IMR-90 (cell line): ENCODE measurements at regions of chr1 and their contacts with region 1.

Region 1: DNA sequence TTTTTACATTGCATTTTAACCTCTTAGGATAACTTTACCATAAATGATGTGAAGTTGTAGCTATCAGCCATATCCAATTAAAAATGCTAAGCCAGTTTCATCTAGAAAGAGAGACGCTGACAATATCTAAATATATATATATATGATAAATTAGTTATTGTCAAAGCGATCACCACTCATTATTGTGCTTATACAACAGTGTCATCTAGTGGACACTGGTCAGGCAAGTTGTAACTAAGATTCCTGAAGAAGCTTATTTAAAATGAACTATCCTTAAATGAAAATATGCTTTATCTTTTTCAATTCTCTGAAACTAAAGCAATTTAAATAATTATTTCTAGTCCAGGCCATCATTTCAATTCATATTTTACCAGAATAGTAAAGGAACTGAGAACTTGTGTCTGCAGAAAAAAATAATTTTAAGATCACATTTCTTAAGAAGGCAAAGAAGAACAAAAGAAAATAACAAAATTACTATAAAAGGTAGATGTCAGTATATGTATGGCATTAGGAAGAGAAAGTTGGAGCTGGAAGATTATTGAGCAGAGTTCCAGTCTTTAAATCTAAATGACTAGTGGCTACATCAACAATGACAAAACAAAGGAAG is 193.3 kb upstream of the SNX7 start:
- DNase-seq: peak; percentile 81
- ATAC-seq: peak; percentile 65; the same call in 1 of the 2 replicates
- H3K4me3 ChIP-seq: no peak overlapping the region
- H3K27ac ChIP-seq: no peak overlapping the region
- H3K4me1 ChIP-seq: peaks cover 2% of the 10 kb centered on the region; the same call in 1 of the 2 replicates
- H3K27me3 ChIP-seq: no peaks in the 10 kb centered on the region
- CTCF ChIP-seq: peak; percentile 96
- POLR2A ChIP-seq: no peak
- RAD21 ChIP-seq: peak; percentile 95

Region 2: GRCh38 chr1:97050501-97050900 is 1417.7 kb before region 1 on chr1:
- CTCF ChIA-PET with region 1: no interaction called
- POLR2A ChIA-PET with region 1: no interaction called
- dilution Hi-C with region 1: no loop called
- in situ Hi-C with region 1: no loop called
- intact Hi-C with region 1: loop called (anchors 5 kb)
- DNase-seq: peak; percentile 59
- ATAC-seq: peak; percentile 84
- H3K4me3 ChIP-seq: no peak overlapping the region
- H3K27ac ChIP-seq: no peak overlapping the region
- H3K4me1 ChIP-seq: no peaks in the 10 kb centered on the region; the same call in 1 of the 2 replicates
- H3K27me3 ChIP-seq: no peaks in the 10 kb centered on the region
- CTCF ChIP-seq: peak; percentile 53
- POLR2A ChIP-seq: no peak
- RAD21 ChIP-seq: peak; percentile 54

Region 3: DNA sequence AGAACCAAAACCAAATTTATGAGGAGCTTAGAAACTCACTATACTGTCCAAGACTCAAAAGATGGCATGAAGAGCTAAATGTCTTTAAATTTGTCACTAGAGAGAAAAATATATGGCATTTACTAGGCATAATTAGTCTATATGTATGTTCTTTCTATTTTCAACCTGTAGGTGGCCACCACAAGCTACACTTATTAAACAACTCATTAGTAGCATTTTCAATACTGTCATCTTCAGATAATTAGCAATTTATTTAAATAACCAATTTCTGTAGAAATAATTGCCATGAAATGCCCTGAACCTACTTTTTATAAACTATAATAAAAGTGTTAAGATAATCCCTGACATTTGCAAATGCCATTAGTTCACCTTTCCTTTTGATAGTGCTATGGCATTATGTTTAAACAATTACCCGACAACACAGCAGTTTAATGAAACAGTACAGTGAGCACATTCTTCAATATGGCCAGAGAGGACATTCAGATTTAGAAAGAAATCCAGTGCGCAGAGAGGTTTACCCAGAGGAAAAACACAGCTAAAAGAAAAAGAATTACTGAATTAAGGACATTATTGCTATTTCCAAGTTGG is 1224.1 kb before region 1 on chr1:
- CTCF ChIA-PET with region 1: no interaction called
- POLR2A ChIA-PET with region 1: no interaction called
- dilution Hi-C with region 1: no loop called
- in situ Hi-C with region 1: loop called (anchors 25 kb)
- intact Hi-C with region 1: loop called (anchors 1 kb)
- DNase-seq: peak; percentile 29
- ATAC-seq: 0 out of 2 replicates have a peak, but pooled peaks have one; percentile 51
- H3K4me3 ChIP-seq: no peak overlapping the region
- H3K27ac ChIP-seq: no peak overlapping the region
- H3K4me1 ChIP-seq: no peaks in the 10 kb centered on the region
- H3K27me3 ChIP-seq: no peaks in the 10 kb centered on the region
- CTCF ChIP-seq: peak; percentile 55
- POLR2A ChIP-seq: no peak
- RAD21 ChIP-seq: peak; percentile 63

Region 4: GRCh38 chr1:97693601-97694000 is 774.6 kb before region 1 on chr1:
- CTCF ChIA-PET with region 1: no interaction called
- POLR2A ChIA-PET with region 1: no interaction called
- dilution Hi-C with region 1: no loop called
- in situ Hi-C with region 1: no loop called
- intact Hi-C with region 1: no loop called
- DNase-seq: no peak
- ATAC-seq: no peak
- H3K4me3 ChIP-seq: no peak overlapping the region
- H3K27ac ChIP-seq: no peak overlapping the region
- H3K4me1 ChIP-seq: no peaks in the 10 kb centered on the region
- H3K27me3 ChIP-seq: no peaks in the 10 kb centered on the region
- CTCF ChIP-seq: no peak
- POLR2A ChIP-seq: no peak
- RAD21 ChIP-seq: no peak

Region 5: DNA sequence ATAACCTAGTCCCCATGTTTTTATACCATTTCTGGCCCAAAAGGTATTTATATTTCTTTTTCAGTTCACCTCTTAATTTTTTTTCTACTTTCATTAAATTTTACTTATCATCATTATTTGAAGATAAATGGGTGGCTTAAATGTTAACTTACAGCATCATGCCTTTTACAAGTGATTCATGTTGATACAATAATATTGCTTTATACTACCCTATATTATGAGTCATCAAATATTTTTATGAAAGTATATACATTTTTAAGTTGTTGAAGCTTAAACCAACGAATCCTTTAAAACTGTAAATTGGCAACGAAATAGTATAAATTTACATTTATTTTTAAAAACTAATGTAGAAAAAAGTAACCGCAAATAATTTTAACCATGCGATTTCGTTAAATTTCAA is 755.2 kb before region 1 on chr1:
- CTCF ChIA-PET with region 1: no interaction called
- POLR2A ChIA-PET with region 1: no interaction called
- dilution Hi-C with region 1: no loop called
- in situ Hi-C with region 1: no loop called
- intact Hi-C with region 1: no loop called
- DNase-seq: no peak
- ATAC-seq: no peak
- H3K4me3 ChIP-seq: no peak overlapping the region
- H3K27ac ChIP-seq: no peak overlapping the region
- H3K4me1 ChIP-seq: no peaks in the 10 kb centered on the region
- H3K27me3 ChIP-seq: no peaks in the 10 kb centered on the region
- CTCF ChIP-seq: no peak
- POLR2A ChIP-seq: no peak
- RAD21 ChIP-seq: no peak

Region 6: DNA sequence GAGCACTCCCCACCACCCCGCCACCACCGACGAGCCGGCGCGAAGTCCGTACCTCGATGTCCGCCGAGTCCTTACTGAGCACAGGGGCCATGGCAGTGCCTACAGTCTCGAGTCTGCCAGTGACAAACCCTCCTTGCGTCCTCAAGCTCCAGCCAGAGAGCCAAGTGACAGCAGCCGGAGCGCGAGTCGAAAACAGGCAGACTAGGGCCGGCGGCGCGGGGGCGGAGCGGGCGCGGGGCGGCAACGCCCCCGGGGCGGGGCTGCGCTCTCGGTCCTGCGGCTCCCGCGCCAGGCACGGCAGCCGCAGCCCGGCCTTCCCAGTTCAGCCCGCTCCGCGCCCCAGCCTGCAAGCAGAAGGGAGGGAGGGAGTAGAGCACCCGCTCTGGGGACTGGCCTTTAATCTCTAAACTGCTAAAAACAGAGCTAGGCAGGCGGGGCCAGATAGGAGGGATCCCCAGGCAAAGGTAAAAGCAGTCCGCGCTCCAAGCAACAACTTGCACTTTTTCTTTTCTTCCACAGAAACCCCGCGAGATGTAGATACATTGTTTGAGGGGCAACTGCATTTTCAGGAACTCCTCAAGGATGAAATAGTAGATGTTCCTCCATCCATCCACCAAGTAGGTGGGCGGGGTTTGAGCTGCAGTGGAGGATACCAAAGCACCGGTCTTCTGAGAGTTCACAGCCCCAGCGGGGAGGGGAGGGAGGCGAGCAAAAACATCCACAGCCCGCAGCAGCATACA is 547.2 kb before region 1 on chr1 and contains the start of gene DPYD:
- CTCF ChIA-PET with region 1: no interaction called
- POLR2A ChIA-PET with region 1: no interaction called
- dilution Hi-C with region 1: no loop called
- in situ Hi-C with region 1: no loop called
- intact Hi-C with region 1: loop called (anchors 5 kb)
- DNase-seq: peak; percentile 85
- ATAC-seq: peak; percentile 98
- H3K4me3 ChIP-seq: peak within 1 kb of the TSS; percentile 92
- H3K27ac ChIP-seq: peak within 1 kb of the TSS; percentile 81
- H3K4me1 ChIP-seq: 0 out of 2 replicates have a peak, but pooled peaks cover 2% of the 10 kb centered on the region
- H3K27me3 ChIP-seq: no peaks in the 10 kb centered on the region
- CTCF ChIP-seq: no peak
- POLR2A ChIP-seq: peak; percentile 70; the same call in 1 of the 2 replicates
- RAD21 ChIP-seq: no peak
- total RNA-seq, gene DPYD: 47.3 and 58.3 TPM in 2 replicates

Region 7: GRCh38 chr1:98048244-98048643 is 420.0 kb before region 1 on chr1:
- CTCF ChIA-PET with region 1: interaction called, 10 read pairs
- POLR2A ChIA-PET with region 1: no interaction called
- dilution Hi-C with region 1: no loop called
- in situ Hi-C with region 1: loop called (anchors 5 kb)
- intact Hi-C with region 1: no loop called
- DNase-seq: peak; percentile 92
- ATAC-seq: peak; percentile 64
- H3K4me3 ChIP-seq: peak overlapping the region; percentile 44
- H3K27ac ChIP-seq: no peak overlapping the region
- H3K4me1 ChIP-seq: peaks cover 6% of the 10 kb centered on the region
- H3K27me3 ChIP-seq: no peaks in the 10 kb centered on the region
- CTCF ChIP-seq: peak; percentile 19; the same call in 1 of the 2 replicates
- POLR2A ChIP-seq: no peak
- RAD21 ChIP-seq: peak; percentile 45

Region 8: GRCh38 chr1:98355656-98356383 is 112.4 kb before region 1 on chr1:
- CTCF ChIA-PET with region 1: no interaction called
- POLR2A ChIA-PET with region 1: no interaction called
- dilution Hi-C with region 1: no loop called
- in situ Hi-C with region 1: no loop called
- intact Hi-C with region 1: no loop called
- DNase-seq: peak; percentile 28
- ATAC-seq: no peak
- H3K4me3 ChIP-seq: no peak overlapping the region
- H3K27ac ChIP-seq: no peak overlapping the region
- H3K4me1 ChIP-seq: no peaks in the 10 kb centered on the region
- H3K27me3 ChIP-seq: no peaks in the 10 kb centered on the region
- CTCF ChIP-seq: no peak
- POLR2A ChIP-seq: no peak
- RAD21 ChIP-seq: no peak